Breast epithelium (tissue), 4 donors: ENCODE measurements at regions of chr3 and their contacts with region 1.

Region 1: GRCh38 chr3:35800960-35801459 is 161.7 kb downstream of the ARPP21 start:
- DNase-seq: no peak
- H3K4me3 ChIP-seq: no peak overlapping the region
- H3K27ac ChIP-seq: no peak overlapping the region
- H3K4me1 ChIP-seq: no peaks in the 10 kb centered on the region
- H3K27me3 ChIP-seq: no peaks in the 10 kb centered on the region
- CTCF ChIP-seq: no peak
- POLR2A ChIP-seq: no peak

Region 2: DNA sequence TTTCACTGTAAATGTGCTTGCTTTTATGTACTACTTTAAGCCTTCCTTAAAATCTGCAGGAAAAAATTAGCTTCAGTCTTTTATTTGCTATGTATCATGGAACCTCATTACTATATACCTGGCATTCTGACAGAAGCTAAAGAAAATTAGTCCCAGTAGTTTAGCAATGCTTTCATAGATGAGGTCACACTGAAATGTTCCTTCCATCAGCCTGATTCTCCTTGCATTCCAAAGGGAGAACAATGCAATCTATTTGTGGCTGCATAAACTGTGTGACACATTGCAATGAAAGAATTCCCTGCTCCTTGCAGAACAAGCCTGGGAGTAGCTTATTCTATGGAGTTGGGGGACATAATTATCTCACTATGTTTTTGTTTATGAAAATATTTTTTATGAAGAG is 853.2 kb before region 1 on chr3:
- intact Hi-C with region 1: loop called (anchors 5 kb)
- DNase-seq: no peak
- H3K4me3 ChIP-seq: no peak overlapping the region
- H3K27ac ChIP-seq: no peak overlapping the region
- H3K4me1 ChIP-seq: no peaks in the 10 kb centered on the region
- H3K27me3 ChIP-seq: no peaks in the 10 kb centered on the region
- CTCF ChIP-seq: no peak
- POLR2A ChIP-seq: no peak

Region 3: DNA sequence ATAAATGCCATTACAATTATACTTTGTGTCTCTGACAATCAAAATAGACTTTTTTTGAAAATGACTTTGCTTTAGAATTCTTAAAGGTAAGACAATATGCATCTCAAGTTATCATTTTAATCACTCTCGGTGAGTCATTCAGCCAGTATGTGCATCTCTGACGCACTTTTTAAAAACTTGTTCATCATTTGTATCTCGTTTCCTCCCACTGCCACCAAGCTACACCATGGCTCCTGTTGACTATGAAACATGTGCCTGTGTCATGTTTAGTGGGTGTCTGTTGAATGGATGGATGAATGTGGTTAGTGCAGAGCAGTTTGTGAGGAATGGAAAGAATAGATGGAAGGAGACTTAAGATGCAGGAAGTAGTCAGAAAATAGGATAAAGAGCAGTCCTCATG is 93.1 kb before region 1 on chr3:
- intact Hi-C with region 1: no loop called
- DNase-seq: no peak
- H3K4me3 ChIP-seq: no peak overlapping the region
- H3K27ac ChIP-seq: no peak overlapping the region
- H3K4me1 ChIP-seq: no peaks in the 10 kb centered on the region
- H3K27me3 ChIP-seq: no peaks in the 10 kb centered on the region
- CTCF ChIP-seq: no peak
- POLR2A ChIP-seq: no peak

Region 4: GRCh38 chr3:36032180-36033047 is 231.4 kb after region 1 on chr3:
- intact Hi-C with region 1: no loop called
- DNase-seq: no peak
- H3K4me3 ChIP-seq: no peak overlapping the region
- H3K27ac ChIP-seq: no peak overlapping the region
- H3K4me1 ChIP-seq: no peaks in the 10 kb centered on the region
- H3K27me3 ChIP-seq: no peaks in the 10 kb centered on the region
- CTCF ChIP-seq: no peak
- POLR2A ChIP-seq: no peak

Region 5: GRCh38 chr3:37660782-37661181 is 1859.8 kb after region 1 on chr3:
- intact Hi-C with region 1: no loop called
- DNase-seq: no peak
- H3K4me3 ChIP-seq: no peak overlapping the region
- H3K27ac ChIP-seq: no peak overlapping the region
- H3K4me1 ChIP-seq: no peaks in the 10 kb centered on the region
- H3K27me3 ChIP-seq: no peaks in the 10 kb centered on the region
- CTCF ChIP-seq: no peak
- POLR2A ChIP-seq: no peak